H1 (cell line): ENCODE measurements at regions of chr17 and their contacts with region 1.

Region 1: DNA sequence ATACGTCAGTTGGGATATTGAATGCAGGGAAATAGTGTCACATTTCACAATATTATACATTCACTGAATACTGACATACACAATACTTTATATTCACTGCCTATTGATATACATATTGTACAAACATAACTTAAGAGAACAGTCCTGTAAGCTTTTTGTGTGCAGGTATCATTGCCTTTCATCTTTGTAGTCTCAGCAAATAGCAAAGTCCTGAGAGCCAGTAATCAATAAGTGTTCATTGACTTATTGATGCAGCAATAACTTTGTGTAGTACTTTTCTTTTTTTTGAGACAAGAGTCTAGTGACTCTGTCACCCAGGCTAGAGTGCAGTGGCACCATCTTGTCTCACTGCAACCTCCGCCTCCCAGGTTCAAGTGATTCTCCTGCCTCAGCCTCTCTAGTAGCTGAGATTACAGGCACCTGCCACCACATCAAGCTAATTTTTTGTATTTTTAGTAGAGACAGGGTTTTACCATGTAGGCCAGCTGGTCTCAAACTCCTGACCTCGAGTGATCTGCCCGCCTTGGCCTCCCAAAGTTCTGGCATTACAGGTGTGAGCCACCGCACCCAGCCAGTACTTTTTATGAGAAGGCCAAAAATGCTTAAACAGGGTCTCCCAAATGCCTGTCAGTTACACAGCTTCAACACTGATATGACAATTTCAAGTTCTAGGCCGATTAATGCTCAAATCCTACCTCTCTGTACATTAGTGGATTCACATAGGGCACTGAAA is 5.4 kb upstream of the NUP85 start:
- DNase-seq: no peak
- H3K4me3 ChIP-seq: no peak overlapping the region
- H3K27ac ChIP-seq: no peak overlapping the region
- H3K4me1 ChIP-seq: peaks cover 0 to 2% (median 0%) of the 10 kb centered on the region in 4 experiments; a peak in 2 of 7 replicates
- H3K27me3 ChIP-seq: no peaks in the 10 kb centered on the region
- CTCF ChIP-seq: no peak
- EP300 ChIP-seq: no peak
- POLR2A ChIP-seq: no peak
- RAD21 ChIP-seq: no peak

Region 2: DNA sequence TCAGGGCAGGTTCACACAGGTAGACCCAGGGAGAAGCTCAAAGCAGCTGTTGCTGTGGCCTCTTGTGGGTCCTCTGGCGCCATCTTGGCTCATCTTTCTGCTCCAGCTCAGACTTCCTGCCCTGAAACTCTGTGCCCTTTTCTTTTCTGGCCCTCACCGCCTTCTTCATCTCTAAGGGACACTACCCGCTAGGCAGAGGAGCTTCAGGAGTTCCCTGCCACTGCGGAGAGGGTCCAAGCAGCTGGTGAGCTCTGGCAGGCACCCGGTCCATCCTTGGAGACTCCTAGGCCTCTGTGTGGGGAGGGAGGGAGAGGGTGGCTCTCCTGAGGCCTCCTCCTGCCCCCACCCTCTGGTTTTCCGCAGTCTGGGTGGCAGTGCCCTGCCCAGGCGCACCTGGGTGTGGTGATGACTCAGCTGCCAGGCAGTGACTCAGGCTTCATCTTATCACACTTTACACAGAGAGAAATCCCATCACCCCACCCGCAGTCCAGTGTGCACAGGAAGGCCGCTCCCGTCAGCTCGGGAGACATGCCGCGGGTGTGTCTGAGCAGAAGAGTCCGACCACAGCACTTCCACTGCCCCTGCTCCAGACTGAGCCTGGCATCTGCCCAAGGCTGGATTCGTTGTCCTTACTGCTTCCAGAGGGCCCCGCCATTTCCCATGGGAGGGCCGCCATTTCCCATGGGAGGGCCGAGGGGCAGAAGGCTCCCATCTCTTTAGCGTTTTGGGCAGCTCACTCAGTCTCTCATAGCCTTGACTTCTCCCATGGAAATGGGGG is 75.8 kb before region 1 on chr17:
- CTCF ChIA-PET with region 1: interaction called, 28 read pairs
- POLR2A ChIA-PET with region 1: interaction called, 3 read pairs
- DNase-seq: no peak
- H3K4me3 ChIP-seq: no peak overlapping the region
- H3K27ac ChIP-seq: no peak overlapping the region; the same call in 1 of the 2 replicates
- H3K4me1 ChIP-seq: peaks cover 0 to 2% (median under 1%) of the 10 kb centered on the region in 4 experiments; a peak in 1 of 7 replicates
- H3K27me3 ChIP-seq: no peaks in the 10 kb centered on the region; a peak in 1 of 7 replicates
- CTCF ChIP-seq: no peak
- EP300 ChIP-seq: no peak
- POLR2A ChIP-seq: no peak
- RAD21 ChIP-seq: no peak